Transverse colon (tissue), 4 donors: ENCODE measurements at regions of chr3 and their contacts with region 1.

Region 1: GRCh38 chr3:8709801-8710539 is 23.6 kb upstream of the CAV3 start:
- DNase-seq: no peak
- H3K4me3 ChIP-seq: no peak overlapping the region
- H3K27ac ChIP-seq: no peak overlapping the region
- H3K4me1 ChIP-seq: no peaks in the 10 kb centered on the region
- H3K27me3 ChIP-seq: no peaks in the 10 kb centered on the region
- CTCF ChIP-seq: no peak
- EP300 ChIP-seq: no peak
- POLR2A ChIP-seq: no peak

Region 2: GRCh38 chr3:7562892-7563291 is 1147.1 kb before region 1 on chr3:
- in situ Hi-C with region 1: no loop called
- intact Hi-C with region 1: loop called (anchors 5 kb)
- DNase-seq: no peak
- H3K4me3 ChIP-seq: no peak overlapping the region
- H3K27ac ChIP-seq: no peak overlapping the region
- H3K4me1 ChIP-seq: no peaks in the 10 kb centered on the region
- H3K27me3 ChIP-seq: no peaks in the 10 kb centered on the region
- CTCF ChIP-seq: no peak
- EP300 ChIP-seq: no peak
- POLR2A ChIP-seq: no peak